SK-MEL-5 (cell line): ENCODE measurements at regions of chr11 and their contacts with region 1.

Region 1: GRCh38 chr11:72263361-72263760 is 19.4 kb upstream of the PHOX2A start:
- DNase-seq: no peak

Region 2: DNA sequence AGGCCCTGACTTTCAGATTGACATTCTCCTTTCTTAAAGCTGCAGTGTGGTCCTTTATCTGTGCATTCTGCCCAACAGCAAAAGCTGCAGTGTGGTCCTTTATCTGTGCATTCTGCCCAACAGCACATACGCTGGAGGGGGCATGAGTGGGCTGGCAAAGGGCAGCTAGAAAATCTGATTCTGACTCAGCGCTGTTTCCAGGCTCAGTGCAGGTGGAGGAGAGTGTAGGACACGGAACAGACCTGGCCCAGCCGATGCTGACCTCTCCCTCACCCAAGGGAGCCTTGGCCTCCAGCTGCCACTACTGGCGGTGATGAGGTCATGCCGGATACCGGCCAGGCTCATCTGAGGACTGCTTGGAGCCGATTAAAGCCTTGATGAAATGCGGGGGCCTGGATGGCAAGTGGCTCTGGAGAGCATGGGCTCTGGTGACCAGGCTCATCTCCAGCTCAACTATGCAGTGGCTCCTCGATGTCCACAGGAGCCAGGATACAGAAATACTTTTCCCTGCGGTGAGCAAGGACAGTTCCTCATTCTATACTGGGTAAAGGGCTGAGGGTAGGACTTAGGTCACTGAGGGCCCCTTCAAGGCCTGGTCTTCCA is 86.4 kb after region 1 on chr11:
- in situ Hi-C with region 1: loop called (anchors 10 kb)
- DNase-seq: no peak